ENCODE measurements at regions of chr20 and their contacts with region 1.

Region 1: DNA sequence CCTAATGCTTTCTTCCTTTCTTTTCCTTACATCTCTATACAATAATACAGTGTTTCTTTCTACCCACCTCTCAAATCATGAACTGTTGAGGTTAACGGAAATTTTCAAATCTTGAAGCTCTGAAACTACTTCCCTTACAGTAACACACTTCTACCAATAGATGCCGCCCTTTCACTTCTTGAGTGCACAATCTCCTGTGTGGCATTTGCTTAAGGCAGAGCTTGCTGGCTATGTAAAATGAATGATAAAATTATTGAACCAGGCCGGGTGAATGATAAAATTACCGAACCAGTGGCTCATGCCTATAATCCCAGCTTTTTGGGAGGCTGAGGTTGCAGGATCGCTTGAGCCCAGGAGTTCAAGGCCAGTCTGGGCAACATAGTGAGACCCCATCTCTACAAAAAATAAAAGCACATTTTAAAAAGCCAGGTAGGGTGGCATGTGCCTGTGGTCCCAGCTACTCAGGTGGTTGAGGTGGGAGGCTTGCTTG is 56.8 kb downstream of the KCNS1 start:
- DNase-seq: peak; percentile 56 to 72
- H3K4me3 ChIP-seq: no peak overlapping the region
- H3K4me1 ChIP-seq: peaks cover 15% of the 10 kb centered on the region
- H3K27me3 ChIP-seq: no peaks in the 10 kb centered on the region

Region 2: GRCh38 chr20:44901974-44902373 is 142.2 kb before region 1 on chr20:
- in situ Hi-C with region 1: no loop called
- DNase-seq: no peak
- H3K4me3 ChIP-seq: no peak overlapping the region
- H3K4me1 ChIP-seq: no peaks in the 10 kb centered on the region
- H3K27me3 ChIP-seq: no peaks in the 10 kb centered on the region

Region 3: GRCh38 chr20:45293041-45294002 is 249.2 kb after region 1 on chr20:
- in situ Hi-C with region 1: loop called (anchors 25 kb)
- DNase-seq: peak; percentile 51 to 91
- H3K4me3 ChIP-seq: peak overlapping the region; percentile 30
- H3K4me1 ChIP-seq: no peaks in the 10 kb centered on the region
- H3K27me3 ChIP-seq: no peaks in the 10 kb centered on the region; the same call in 1 of the 2 replicates

Region 4: DNA sequence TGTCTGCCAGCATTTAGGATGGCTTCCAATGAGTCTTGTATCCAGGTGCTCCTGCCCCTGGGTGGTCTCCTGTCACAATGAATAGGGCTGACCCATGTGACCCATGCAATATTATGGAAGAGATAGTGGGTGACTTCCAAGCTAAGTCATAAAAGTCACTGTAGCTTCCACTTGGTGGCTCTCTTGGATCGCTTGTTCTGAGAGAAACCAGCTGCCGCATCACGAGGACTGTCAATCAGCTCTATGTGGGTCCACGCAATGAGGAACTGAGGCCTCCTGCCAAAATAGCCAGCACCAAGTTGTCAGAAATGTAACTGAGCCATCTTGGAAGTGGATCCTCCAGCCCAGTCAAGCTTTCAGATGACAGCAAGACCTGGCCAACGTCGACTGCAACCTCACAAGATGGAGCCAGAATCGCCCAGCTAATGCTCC is 278.8 kb after region 1 on chr20:
- in situ Hi-C with region 1: no loop called
- DNase-seq: no peak
- H3K4me3 ChIP-seq: no peak overlapping the region
- H3K4me1 ChIP-seq: no peaks in the 10 kb centered on the region
- H3K27me3 ChIP-seq: no peaks in the 10 kb centered on the region

Region 5: GRCh38 chr20:46040902-46041535 is 996.9 kb after region 1 on chr20:
- in situ Hi-C with region 1: no loop called
- DNase-seq: peak; percentile 32 to 85
- H3K4me3 ChIP-seq: no peak overlapping the region
- H3K4me1 ChIP-seq: no peaks in the 10 kb centered on the region
- H3K27me3 ChIP-seq: 0 out of 2 replicates have a peak, but pooled peaks cover 3% of the 10 kb centered on the region

Measured in HAP-1 (cell line).